A549 (cell line): ENCODE measurements at regions of chr12 and their contacts with region 1.

Region 1: GRCh38 chr12:132003846-132004245 is 54.1 kb downstream of the EP400 start:
- DNase-seq: no peak
- ATAC-seq: no peak
- H3K4me3 ChIP-seq: no peak overlapping the region
- H3K27ac ChIP-seq: no peak overlapping the region
- H3K4me1 ChIP-seq: peaks cover 9% of the 10 kb centered on the region; the same call in 1 of the 3 replicates
- CTCF ChIP-seq: no peak
- EP300 ChIP-seq: no peak
- POLR2A ChIP-seq: no peak
- RAD21 ChIP-seq: no peak

Region 2: DNA sequence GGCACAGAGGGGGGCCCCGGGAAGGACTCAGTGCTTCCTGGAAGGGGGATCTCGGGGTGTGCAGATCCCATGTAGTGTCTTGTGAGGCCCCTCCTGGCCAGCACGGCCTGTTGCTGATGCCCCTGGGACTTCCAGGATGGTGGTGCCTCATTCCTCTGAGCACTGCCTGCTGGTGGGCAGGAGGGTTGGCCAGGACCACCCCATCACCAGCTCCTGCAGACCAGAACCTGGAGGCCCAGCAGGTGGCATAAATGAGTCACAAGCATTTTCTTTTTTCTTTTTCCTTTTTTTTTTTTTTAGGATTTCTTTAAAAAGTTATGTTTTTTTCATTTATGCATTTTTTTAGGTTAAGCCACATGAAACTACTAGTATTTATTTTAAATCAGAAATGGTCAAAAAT is 167.7 kb before region 1 on chr12:
- CTCF ChIA-PET with region 1: interaction called, 13 read pairs
- POLR2A ChIA-PET with region 1: no interaction called
- DNase-seq: no peak
- ATAC-seq: no peak
- H3K4me3 ChIP-seq: no peak overlapping the region
- H3K27ac ChIP-seq: no peak overlapping the region
- H3K4me1 ChIP-seq: peaks cover 22% of the 10 kb centered on the region; the same call in 2 of the 3 replicates
- CTCF ChIP-seq: peak; percentile 52
- EP300 ChIP-seq: no peak
- POLR2A ChIP-seq: no peak
- RAD21 ChIP-seq: peak; percentile 46 to 61; a peak in 4 of 5 replicates

Region 3: DNA sequence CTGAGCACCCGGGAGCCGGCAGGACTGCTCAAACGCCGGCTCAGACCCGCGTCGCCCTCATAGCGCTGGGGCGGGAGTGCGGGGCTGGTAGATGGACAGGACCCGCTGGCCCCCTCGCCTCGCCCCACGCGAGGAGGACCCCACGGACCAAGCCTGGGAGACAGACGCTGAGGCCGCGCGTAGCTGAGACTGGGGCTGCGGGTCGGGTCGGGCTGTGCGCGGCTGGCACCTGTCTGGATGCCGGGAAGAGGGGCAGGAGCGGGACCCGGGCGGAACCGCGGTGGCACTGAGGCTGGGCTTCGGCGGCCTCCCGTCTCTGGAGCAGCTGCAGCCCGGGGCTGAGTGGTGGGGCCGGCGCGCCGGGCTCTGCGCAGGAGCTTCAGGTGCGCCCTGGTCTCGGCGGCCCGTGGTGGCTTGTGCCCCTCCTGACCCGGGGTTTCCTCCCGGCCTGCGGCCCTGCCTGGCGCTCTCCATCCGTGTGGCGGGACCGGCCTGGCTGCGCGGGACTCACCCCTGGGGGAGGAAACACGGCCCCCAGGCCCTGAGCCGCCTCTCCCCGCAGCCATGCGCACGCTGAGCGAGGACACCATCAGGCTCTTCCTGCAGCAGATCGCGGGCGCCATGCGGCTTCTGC is 95.6 kb before region 1 on chr12:
- CTCF ChIA-PET with region 1: no interaction called
- POLR2A ChIA-PET with region 1: no interaction called
- DNase-seq: no peak
- ATAC-seq: no peak
- H3K4me3 ChIP-seq: no peak overlapping the region
- H3K27ac ChIP-seq: peak overlapping the region in 1 of 2 experiments; percentile 3; a peak in 1 of 6 replicates
- H3K4me1 ChIP-seq: peaks cover 55% of the 10 kb centered on the region
- CTCF ChIP-seq: no peak
- EP300 ChIP-seq: no peak
- POLR2A ChIP-seq: no peak
- RAD21 ChIP-seq: no peak

Region 4: DNA sequence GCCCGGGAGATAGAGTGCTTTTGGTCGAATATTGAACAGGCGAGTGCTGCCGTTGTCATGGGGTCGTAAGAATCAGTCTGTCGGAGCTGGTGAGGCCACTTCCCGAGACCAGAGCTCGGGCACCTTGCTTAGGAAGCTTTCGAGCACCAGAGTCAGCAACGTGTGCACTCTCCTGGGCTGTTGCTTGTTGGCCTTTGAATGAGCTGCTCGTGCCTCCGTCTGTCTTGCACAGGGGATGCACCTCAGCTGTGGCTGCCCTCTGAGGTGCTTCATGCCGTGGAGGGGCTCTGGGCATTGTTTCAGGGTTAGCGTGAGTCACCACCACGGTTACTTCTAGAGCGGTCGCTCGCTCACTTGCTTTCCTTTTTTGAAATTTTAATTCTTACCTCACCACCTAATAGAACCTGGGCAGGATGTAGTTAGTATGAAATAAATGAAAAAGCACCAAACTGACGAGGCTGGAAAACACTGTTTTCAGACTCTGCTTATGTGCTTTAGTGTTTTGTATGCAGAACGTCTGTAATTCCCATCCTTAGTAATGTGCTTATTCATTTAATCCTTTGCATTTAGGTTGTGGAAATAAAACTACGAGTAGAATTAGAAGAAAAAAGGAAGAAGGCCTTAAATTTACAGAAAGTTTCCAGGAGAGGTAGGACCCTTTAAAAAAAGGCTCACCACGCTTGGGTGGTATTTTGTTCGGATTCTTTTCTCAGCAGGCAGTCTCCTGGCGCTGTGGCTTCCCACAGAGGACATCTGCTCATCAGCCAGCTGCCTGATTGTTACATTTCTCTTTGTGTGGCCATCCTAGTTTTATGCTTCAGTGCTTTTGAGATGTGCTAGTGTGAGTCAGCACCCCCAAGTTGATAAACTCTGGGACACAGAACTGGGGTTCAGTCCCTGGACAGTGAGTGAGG is 13.5 kb before region 1 on chr12:
- CTCF ChIA-PET with region 1: interaction called, 13 read pairs
- POLR2A ChIA-PET with region 1: no interaction called
- DNase-seq: no peak
- ATAC-seq: no peak
- H3K4me3 ChIP-seq: no peak overlapping the region
- H3K27ac ChIP-seq: no peak overlapping the region
- H3K4me1 ChIP-seq: peaks cover 11% of the 10 kb centered on the region
- CTCF ChIP-seq: no peak
- EP300 ChIP-seq: no peak
- POLR2A ChIP-seq: no peak
- RAD21 ChIP-seq: no peak

Region 5: GRCh38 chr12:132014092-132014914 is 10.5 kb after region 1 on chr12:
- CTCF ChIA-PET with region 1: interaction called, 12 read pairs
- POLR2A ChIA-PET with region 1: no interaction called
- DNase-seq: no peak
- ATAC-seq: peak in 1 of 2 experiments; percentile 28; a peak in 3 of 6 replicates
- H3K4me3 ChIP-seq: no peak overlapping the region
- H3K27ac ChIP-seq: no peak overlapping the region; a peak in 1 of 6 replicates
- H3K4me1 ChIP-seq: peaks cover 5% of the 10 kb centered on the region; the same call in 1 of the 3 replicates
- CTCF ChIP-seq: no peak
- EP300 ChIP-seq: no peak
- POLR2A ChIP-seq: no peak
- RAD21 ChIP-seq: no peak